BJ (cell line): ENCODE measurements at regions of chr1 and their contacts with region 1.

Region 1: DNA sequence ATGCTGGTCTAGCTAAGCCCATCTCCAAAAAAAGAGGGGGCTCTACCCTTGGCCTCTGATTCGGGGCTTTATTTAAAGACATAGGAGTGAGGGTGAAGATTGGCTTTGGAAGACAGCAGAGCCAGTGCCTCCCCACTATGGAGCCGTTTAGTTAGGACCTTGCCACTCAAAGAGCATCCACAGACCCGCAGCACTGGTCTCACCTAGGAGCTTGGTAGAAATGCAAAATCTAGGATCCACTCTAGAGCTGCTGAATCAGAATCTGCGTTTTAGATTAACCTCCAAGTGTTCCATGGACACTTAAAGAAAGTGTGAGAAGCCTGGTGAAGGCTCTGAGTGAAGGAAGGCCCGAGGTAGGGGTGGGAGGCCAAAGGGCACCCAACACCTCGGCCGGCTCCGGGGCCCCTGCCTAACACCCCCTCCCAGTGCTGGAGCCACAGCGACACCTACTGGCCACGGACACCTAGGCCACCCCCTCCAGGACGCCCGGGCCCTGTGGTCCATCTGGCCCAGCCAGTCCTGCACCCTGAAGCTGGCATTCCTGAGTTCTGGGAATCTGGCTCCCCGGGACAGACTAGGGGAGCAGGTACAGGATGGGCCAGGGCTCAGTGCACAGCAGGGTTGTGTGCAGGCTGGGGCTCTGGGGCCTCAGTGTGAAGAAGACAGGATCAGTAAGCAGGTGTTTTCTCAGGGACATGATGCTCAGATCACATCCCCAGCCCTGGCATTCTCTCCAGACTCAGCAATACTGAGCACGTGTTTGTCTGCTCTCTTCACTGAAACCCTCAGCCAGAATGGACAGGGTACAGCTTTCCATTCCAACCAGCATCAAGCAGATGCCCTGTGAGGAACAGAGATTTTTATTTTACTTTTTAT is 79.2 kb downstream of the TMEM53 start:
- DNase-seq: no peak
- H3K4me3 ChIP-seq: no peak overlapping the region
- H3K27me3 ChIP-seq: peaks cover 13% of the 10 kb centered on the region
- CTCF ChIP-seq: peak; percentile 98

Region 2: GRCh38 chr1:44213222-44214112 is 381.6 kb before region 1 on chr1 and contains the start of gene DMAP1:
- CTCF ChIA-PET with region 1: interaction called, 39 read pairs
- POLR2A ChIA-PET with region 1: no interaction called
- DNase-seq: peak; percentile 7
- H3K4me3 ChIP-seq: peak within 1 kb of the TSS; percentile 52
- H3K27me3 ChIP-seq: no peaks in the 10 kb centered on the region
- CTCF ChIP-seq: peak; percentile 7; the same call in 1 of the 2 replicates
- polyA plus RNA-seq, gene DMAP1: 32.4 and 45.1 TPM in 2 replicates

Region 3: DNA sequence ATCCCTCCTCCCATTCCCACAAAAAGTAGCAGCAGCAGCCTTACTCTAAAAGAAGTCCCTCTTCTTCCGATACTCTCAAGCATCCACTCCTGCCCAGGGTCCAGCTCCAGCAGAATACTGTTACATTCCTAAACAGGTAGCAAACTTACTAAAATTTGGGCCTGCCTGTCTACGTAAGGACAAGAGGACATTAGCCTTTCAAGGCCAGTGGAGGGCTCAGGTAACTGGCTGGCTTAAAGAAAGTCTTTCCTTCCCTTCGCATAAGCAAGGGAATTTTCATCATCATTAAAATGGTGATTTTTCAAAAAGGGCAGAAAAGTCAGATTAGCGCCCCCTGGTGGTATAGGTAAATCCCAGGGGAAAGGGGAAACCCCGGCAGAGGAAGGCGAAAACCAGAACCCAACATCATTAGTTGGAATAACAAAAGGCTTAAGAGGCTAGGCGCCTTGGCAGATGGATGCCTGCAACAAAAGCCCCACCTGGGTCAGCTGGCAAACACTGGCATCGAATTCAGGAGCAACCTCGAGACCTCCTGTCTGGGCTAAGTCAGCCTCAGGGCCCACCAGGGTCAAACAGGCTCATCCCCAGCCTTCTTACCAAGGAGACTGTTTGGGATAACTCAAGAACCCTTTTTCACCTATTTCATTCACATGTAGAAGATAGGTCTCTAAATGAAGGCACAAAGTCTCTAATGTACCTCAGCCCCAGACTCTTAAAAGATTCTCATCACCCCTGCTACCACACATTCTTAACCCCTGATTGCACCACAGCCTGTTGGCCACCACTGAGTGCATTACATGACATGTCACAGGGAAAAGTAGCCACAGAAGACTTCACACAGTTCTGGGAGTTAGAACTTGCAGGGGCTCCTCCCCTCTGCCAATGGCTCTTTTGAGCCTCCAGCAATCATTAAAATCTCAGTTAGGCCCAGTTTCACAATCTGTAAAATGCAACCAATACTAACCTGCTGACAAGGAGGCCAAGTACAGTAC is 276.7 kb before region 1 on chr1:
- CTCF ChIA-PET with region 1: interaction called, 13 read pairs
- POLR2A ChIA-PET with region 1: no interaction called
- DNase-seq: no peak
- H3K4me3 ChIP-seq: no peak overlapping the region
- H3K27me3 ChIP-seq: no peaks in the 10 kb centered on the region
- CTCF ChIP-seq: peak; percentile 83

Region 4: GRCh38 chr1:44390277-44390676 is 204.8 kb before region 1 on chr1:
- CTCF ChIA-PET with region 1: interaction called, 11 read pairs
- POLR2A ChIA-PET with region 1: no interaction called
- DNase-seq: peak; percentile 53
- H3K4me3 ChIP-seq: no peak overlapping the region
- H3K27me3 ChIP-seq: peaks cover 2% of the 10 kb centered on the region; the same call in 1 of the 2 replicates
- CTCF ChIP-seq: no peak

Region 5: DNA sequence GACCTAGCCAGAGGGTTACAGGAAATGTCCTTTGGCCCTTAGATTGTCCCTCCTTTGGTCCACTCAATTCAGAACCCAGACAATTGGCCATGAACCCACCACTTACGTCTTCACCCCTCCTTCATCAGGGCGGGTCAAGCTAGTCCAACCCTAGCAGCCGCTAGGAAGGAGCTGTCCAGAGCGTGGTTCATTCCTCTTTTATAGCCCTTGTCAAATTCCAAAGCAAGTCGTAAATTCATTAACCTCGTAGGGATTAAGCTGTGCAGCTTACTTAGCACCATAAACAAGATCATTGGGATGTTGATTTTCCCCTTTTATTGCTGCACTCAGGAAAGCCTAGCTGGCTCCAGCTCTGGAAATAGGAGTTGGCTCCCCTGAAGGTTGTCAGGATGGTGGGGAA is 10.9 kb before region 1 on chr1:
- CTCF ChIA-PET with region 1: interaction called, 17 read pairs
- POLR2A ChIA-PET with region 1: no interaction called
- DNase-seq: no peak
- H3K4me3 ChIP-seq: no peak overlapping the region
- H3K27me3 ChIP-seq: peaks cover 16% of the 10 kb centered on the region
- CTCF ChIP-seq: no peak

Region 6: DNA sequence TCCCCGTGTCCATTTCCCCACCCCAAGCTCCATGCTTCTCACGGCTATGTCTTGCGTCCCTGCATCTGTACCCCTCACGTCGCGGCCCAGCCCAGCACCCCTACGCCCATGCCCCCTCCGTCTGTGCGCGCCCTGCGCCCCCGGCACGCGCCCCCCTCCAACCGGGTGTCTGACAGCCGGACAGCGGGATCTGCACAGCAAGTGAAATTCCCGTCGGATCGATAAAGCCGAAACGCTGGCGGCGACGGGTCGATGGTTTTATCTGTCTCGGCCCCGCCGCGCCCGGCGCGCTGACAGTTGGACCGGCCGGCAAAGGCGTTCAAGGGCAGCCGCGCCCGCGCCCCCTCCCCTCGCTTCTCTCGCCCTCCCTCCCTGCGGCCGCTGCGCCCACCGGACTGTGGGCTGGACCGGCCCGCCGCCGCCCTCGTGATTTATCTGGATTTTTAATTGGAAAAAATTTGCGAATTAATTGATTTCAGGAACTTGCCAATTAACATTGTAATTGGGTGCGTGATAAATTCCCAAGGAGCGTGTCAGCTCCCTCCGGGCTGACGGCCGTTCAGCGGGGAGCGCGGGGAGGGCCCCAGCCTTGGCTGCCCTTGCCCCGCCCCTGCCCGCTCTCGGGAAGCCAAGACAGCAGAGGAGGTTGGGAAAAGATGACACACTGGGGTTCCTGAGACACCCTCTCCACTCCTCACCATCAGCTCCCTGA is 22.0 kb after region 1 on chr1:
- CTCF ChIA-PET with region 1: interaction called, 12 read pairs
- POLR2A ChIA-PET with region 1: no interaction called
- DNase-seq: no peak
- H3K4me3 ChIP-seq: peak overlapping the region; percentile 38
- H3K27me3 ChIP-seq: no peaks in the 10 kb centered on the region
- CTCF ChIP-seq: no peak